Activated naive CD8-positive, alpha-beta T cell treated with anti-CD3 and anti-CD28 coated beads, Interleukin-2, amount 10 ng/mL, durations not matched to agents 7 days and 5 days (primary cell): ENCODE measurements at regions of chr17 and their contacts with region 1.

Region 1: DNA sequence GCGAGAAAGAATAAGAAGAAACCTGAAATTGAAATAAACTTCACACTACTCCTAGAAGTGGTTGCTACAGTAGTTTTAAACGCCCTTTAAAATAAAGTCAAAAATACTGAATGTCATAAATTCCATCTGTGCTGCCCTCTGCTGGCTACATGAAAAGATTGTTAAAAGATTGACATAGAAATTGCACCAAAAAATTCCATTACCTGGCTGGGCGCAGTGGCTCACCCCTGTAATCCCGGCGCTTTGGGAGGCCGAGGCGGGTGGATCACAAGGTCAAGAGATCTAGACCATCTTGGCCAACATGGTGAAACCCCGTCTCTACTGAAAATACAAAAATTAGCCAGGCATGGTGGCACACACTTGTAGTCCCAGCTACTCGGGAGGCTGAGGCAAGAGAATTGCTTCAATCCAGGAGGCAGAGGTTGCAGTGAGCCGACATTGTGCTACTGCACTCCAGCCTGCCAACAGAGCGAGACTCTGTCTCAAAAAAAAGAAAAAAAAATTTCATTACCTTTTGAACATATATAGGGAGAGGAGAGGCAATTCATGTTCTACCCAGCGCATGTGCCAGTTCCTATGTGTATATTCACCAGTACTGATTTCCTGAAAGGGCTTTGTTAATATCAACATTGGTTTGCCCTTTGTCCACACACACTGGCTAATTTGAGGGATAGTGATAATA is 36.5 kb downstream of the CYTH1 start:
- DNase-seq: no peak
- ATAC-seq: no peak
- H3K4me3 Mint-ChIP-seq: peak overlapping the region; percentile 30
- H3K27ac Mint-ChIP-seq: peak overlapping the region; percentile 41
- H3K4me1 Mint-ChIP-seq: peaks cover 70% of the 10 kb centered on the region
- H3K27me3 Mint-ChIP-seq: no peaks in the 10 kb centered on the region

Region 2: GRCh38 chr17:78759203-78759968 is 13.8 kb after region 1 on chr17:
- POLR2A ChIA-PET with region 1: interaction called, 20 read pairs
- DNase-seq: peak; percentile 65
- ATAC-seq: peak; percentile 77
- H3K4me3 Mint-ChIP-seq: peak overlapping the region; percentile 64
- H3K27ac Mint-ChIP-seq: peak overlapping the region; percentile 86
- H3K4me1 Mint-ChIP-seq: peaks cover 50% of the 10 kb centered on the region
- H3K27me3 Mint-ChIP-seq: no peaks in the 10 kb centered on the region

Region 3: DNA sequence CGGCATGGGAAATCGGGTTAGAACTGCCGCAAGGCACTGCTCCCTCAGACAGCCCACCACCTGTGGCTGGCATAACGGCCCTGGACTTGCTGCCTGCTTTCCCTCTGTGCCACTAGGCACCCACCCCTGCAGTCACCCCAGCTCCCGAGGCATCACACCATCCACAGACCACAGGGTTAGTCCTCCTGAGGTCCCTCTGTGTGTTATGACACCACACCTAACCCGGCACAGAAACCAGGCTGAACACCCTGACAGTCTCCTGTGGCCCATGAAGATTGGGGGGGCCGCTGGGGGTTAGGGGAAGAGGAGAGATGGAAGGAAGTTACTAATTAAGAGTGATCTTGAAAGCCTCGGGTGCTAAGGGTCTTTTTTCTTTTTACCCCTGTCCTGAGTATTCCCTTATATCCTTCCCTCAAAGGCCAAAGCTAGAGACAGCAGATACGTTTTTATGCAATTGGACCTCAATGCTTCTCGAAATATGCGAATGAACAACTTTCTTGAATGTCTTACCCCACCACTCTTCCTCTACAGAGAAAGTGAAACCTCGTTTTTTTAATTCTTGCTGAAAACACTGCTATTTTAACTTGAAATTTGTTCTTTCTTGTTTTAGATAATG is 29.5 kb after region 1 on chr17:
- POLR2A ChIA-PET with region 1: interaction called, 41 read pairs
- DNase-seq: peak; percentile 75
- ATAC-seq: peak; percentile 64
- H3K4me3 Mint-ChIP-seq: peak overlapping the region; percentile 80
- H3K27ac Mint-ChIP-seq: peak overlapping the region; percentile 93
- H3K4me1 Mint-ChIP-seq: peaks cover 55% of the 10 kb centered on the region
- H3K27me3 Mint-ChIP-seq: no peaks in the 10 kb centered on the region